Left cardiac atrium (tissue), 4 donors: ENCODE measurements at regions of chr10 and their contacts with region 1.

Region 1: GRCh38 chr10:29517352-29517923 is 117.3 kb downstream of the SVIL start:
- DNase-seq: no peak
- ATAC-seq: peak in 1 of 2 donors; percentile 12

Region 2: GRCh38 chr10:29022473-29022872 is 495.0 kb before region 1 on chr10:
- intact Hi-C with region 1: no loop called
- DNase-seq: no peak
- ATAC-seq: no peak

Region 3: GRCh38 chr10:29590915-29591650 is 73.6 kb after region 1 on chr10:
- intact Hi-C with region 1: loop called in 1 of 2 experiments (anchors 5 kb)
- DNase-seq: no peak
- ATAC-seq: no peak